ENCODE measurements at regions of chr12 and their contacts with region 1.

Region 1: DNA sequence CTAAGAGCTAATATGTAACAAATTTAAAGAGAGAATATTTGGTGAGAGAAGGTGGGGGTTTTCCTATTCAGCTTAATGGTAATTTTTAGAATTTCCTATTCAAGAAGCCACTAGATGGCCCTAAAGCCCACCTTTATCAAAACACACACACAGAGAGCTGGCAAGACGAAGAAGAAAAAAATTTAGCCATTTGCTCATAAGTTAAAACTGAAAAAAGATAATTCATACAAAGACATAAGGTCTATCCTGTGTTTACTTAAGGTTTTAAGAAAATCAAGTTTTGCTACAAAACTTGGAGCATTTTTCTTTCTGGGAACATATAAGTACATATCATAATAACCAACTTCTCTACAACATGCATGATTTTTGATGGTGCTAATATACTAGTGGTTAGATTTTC is 46.8 kb upstream of the PCED1B start:
- DNase-seq: no peak
- H3K4me3 ChIP-seq: no peak overlapping the region
- CTCF ChIP-seq: peak; percentile 27

Region 2: GRCh38 chr12:46921048-46921763 is 111.4 kb before region 1 on chr12:
- CTCF ChIA-PET with region 1: no interaction called
- POLR2A ChIA-PET with region 1: no interaction called
- DNase-seq: no peak
- H3K4me3 ChIP-seq: no peak overlapping the region
- CTCF ChIP-seq: no peak

Region 3: DNA sequence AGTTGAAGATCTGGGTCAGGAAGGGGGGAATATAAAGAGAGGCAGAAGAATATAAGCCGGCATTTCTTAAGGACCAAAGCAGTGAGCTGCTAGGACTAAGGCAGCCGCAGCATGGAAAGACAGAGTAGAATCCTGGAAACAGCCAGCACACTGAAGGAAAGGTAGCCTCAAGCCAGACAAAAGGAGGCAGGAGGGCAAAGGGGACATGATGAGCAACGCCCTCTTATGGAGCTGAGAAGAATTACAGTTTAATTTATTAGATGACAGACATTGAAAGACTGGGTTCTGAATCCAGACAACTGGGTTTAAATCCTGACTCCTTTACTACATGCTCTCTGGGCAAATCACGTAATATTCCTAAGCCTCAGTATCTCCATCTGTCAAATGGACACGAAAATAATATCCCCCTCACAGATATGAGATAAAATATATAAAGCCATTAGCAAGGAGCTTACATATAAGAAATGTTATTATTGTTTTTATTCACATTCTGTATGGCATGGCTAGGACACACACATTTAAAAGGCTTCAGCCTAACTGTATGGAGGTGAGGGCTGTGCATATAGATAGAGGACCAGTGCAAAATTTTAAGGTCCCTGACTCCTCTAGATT is 38.7 kb after region 1 on chr12:
- CTCF ChIA-PET with region 1: interaction called, 29 read pairs
- POLR2A ChIA-PET with region 1: no interaction called
- DNase-seq: no peak
- H3K4me3 ChIP-seq: no peak overlapping the region
- CTCF ChIP-seq: peak; percentile 17

Region 4: DNA sequence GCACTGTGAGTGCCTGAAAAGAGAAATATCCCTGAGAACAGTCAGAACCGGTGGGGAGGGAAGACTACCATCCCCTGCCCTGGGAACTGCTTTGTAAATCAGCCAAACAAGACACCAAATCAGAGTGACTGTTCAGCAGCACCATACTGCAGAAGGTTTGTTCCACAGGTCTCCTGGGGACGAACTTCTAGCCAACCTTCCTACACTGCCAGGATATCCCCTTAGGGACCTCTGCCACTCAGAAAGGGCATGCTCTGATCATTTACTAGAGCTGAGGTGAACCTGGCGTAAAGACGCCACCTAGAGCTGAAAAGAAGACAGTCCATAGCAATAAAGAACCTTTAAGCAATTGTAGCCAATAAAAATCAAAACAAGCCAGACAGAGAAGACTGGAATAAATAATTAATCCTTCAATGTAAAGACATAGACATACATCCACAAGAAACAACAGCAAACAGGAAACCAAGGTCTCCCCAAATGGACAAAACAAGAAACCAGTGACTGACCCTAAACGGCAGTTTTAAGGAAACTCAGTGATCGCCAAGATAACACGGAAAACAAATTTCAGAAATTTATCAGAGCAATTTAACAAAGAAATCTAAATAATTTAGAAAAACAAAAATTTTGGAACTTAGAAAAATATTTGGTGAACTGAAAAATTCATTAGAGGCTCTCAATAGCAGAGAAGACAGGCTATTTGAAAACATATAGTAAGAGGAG is 275.2 kb after region 1 on chr12:
- CTCF ChIA-PET with region 1: interaction called, 57 read pairs
- POLR2A ChIA-PET with region 1: interaction called, 3 read pairs
- DNase-seq: no peak
- H3K4me3 ChIP-seq: no peak overlapping the region
- CTCF ChIP-seq: peak; percentile 54

Region 5: GRCh38 chr12:47547085-47547484 is 514.4 kb after region 1 on chr12:
- CTCF ChIA-PET with region 1: interaction called, 14 read pairs
- POLR2A ChIA-PET with region 1: no interaction called
- DNase-seq: peak; percentile 9
- H3K4me3 ChIP-seq: no peak overlapping the region
- CTCF ChIP-seq: peak; percentile 49

Region 6: DNA sequence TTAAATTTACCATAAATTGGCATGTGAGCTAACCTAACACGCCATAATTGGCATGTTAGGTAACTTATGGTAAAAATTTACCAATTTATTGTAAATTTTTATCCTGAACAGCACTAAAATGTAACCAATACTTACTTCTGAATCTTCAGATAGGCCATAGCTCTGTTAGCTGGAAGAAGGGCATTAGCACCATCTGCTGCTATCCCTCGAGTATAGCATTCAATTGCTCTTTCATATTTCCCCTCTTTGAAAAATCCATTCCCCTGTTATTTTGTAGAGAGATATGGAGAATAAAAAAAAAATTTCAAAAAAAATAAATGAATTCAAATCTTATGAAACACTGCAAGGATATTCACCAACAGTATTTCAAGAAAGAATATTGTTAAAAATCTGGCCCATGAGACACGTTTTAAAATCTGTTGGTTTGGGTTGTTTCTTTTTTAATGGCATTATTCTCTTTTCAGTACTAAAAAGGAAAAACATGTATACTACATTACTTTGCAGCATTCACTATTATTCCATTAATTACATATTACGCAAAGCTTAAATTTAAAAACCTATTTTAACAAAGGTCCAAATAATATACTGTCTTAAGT is 654.1 kb after region 1 on chr12:
- CTCF ChIA-PET with region 1: interaction called, 122 read pairs
- POLR2A ChIA-PET with region 1: interaction called, 3 read pairs
- DNase-seq: peak; percentile 7
- H3K4me3 ChIP-seq: no peak overlapping the region
- CTCF ChIP-seq: peak; percentile 63